PC-3 (cell line): ENCODE measurements at regions of chr17 and their contacts with region 1.

Region 1: DNA sequence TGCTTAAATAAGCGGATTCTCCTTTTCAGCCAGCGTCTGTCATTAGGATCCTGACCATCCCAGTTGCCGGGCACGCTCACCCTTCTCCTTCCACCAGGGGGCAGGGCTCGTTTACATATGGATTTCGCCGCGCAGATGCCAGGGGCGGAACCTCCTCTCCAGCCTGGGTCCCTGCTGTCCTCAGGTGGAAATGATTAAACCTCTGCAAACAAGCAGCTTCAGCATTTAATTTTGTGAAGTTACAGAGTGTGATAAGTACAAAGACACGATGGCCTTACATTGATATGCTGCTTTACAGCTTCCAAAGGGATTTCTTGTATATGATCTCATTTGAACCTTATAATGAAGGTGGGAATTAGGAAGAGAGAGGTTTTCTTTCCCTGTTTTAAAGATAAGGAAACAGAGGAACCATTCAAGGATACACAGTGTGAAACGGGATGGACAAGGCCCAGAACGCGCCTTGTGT is 3.9 kb upstream of the KRT28 start:
- DNase-seq: peak; percentile 82
- ATAC-seq: peak; percentile 85
- H3K4me3 ChIP-seq: no peak overlapping the region
- H3K27ac ChIP-seq: peak overlapping the region; percentile 31; the same call in 1 of the 2 replicates
- H3K4me1 ChIP-seq: peaks cover 8% of the 10 kb centered on the region
- H3K27me3 ChIP-seq: no peaks in the 10 kb centered on the region
- CTCF ChIP-seq: peak; percentile 86

Region 2: GRCh38 chr17:39963829-39964228 is 839.8 kb before region 1 on chr17:
- CTCF ChIA-PET with region 1: no interaction called
- POLR2A ChIA-PET with region 1: no interaction called
- intact Hi-C with region 1: no loop called
- DNase-seq: peak; percentile 74
- ATAC-seq: peak; percentile 33; the same call in 1 of the 2 replicates
- H3K4me3 ChIP-seq: no peak overlapping the region
- H3K27ac ChIP-seq: no peak overlapping the region
- H3K4me1 ChIP-seq: no peaks in the 10 kb centered on the region
- H3K27me3 ChIP-seq: no peaks in the 10 kb centered on the region
- CTCF ChIP-seq: no peak

Region 3: GRCh38 chr17:40854159-40854814 is 50.6 kb after region 1 on chr17:
- CTCF ChIA-PET with region 1: interaction called, 3 read pairs
- POLR2A ChIA-PET with region 1: no interaction called
- intact Hi-C with region 1: loop called (anchors 2 kb)
- DNase-seq: peak; percentile 84
- ATAC-seq: peak; percentile 81
- H3K4me3 ChIP-seq: no peak overlapping the region
- H3K27ac ChIP-seq: peak overlapping the region; percentile 64
- H3K4me1 ChIP-seq: peaks cover 51% of the 10 kb centered on the region
- H3K27me3 ChIP-seq: no peaks in the 10 kb centered on the region
- CTCF ChIP-seq: no peak

Region 4: GRCh38 chr17:40884708-40885512 is 81.3 kb after region 1 on chr17 and contains the start of gene KRT20:
- CTCF ChIA-PET with region 1: no interaction called
- POLR2A ChIA-PET with region 1: no interaction called
- intact Hi-C with region 1: no loop called
- DNase-seq: peak; percentile 14
- ATAC-seq: no peak
- H3K4me3 ChIP-seq: no peak within 1 kb of the TSS
- H3K27ac ChIP-seq: no peak within 1 kb of the TSS
- H3K4me1 ChIP-seq: peaks cover 5% of the 10 kb centered on the region; the same call in 1 of the 2 replicates
- H3K27me3 ChIP-seq: no peaks in the 10 kb centered on the region
- CTCF ChIP-seq: peak; percentile 33; the same call in 1 of the 2 replicates
- total RNA-seq, gene KRT20: 0.18 TPM in 1 of 2 replicates, not detected in the other

Region 5: DNA sequence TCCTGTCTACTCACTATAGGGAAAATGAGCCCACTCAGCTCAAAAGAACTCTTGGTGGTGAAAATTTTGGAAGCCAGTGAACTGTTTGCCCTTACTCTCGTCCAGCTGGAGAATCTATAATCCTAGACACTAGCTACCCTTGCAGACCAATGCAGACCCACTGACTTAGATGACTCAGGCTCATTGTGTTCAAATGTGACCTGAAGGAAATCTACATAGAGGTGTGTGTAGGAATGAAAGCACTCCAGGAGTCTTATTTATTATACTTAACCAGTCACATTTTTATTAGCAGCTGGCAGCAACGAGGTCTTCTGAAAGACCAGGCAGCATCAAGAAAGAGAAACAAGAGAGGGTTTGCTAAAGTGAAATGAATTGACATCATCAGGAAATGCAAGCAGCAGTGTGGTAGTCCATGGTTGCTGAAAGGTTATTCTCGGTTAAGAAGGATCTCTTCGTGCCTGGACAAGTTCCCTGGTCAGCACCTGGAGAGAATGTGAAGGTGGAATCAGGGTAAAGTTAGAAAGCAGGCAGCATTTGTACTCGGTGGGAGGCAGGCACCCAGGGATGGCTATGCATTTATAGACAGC is 497.6 kb after region 1 on chr17:
- CTCF ChIA-PET with region 1: no interaction called
- POLR2A ChIA-PET with region 1: interaction called, 13 read pairs
- intact Hi-C with region 1: no loop called
- DNase-seq: no peak
- ATAC-seq: no peak
- H3K4me3 ChIP-seq: no peak overlapping the region
- H3K27ac ChIP-seq: no peak overlapping the region
- H3K4me1 ChIP-seq: no peaks in the 10 kb centered on the region
- H3K27me3 ChIP-seq: no peaks in the 10 kb centered on the region
- CTCF ChIP-seq: no peak

Region 6: GRCh38 chr17:41521574-41522261 is 718.1 kb after region 1 on chr17:
- CTCF ChIA-PET with region 1: no interaction called
- POLR2A ChIA-PET with region 1: no interaction called
- intact Hi-C with region 1: loop called (anchors 10 kb)
- DNase-seq: peak; percentile 95
- ATAC-seq: peak; percentile 60
- H3K4me3 ChIP-seq: peak overlapping the region; percentile 42; the same call in 1 of the 2 replicates
- H3K27ac ChIP-seq: peak overlapping the region; percentile 97
- H3K4me1 ChIP-seq: peaks cover 76% of the 10 kb centered on the region
- H3K27me3 ChIP-seq: no peaks in the 10 kb centered on the region
- CTCF ChIP-seq: no peak